Naive thymus-derived CD4-positive, alpha-beta T cell (primary cell): ENCODE measurements at regions of chr16 and their contacts with region 1.

Region 1: GRCh38 chr16:22374311-22375116 is at the start of gene CDR2:
- DNase-seq: peak; percentile 94 to 99 (median 98)
- ATAC-seq: peak; percentile 97
- H3K4me3 ChIP-seq: peak within 1 kb of the TSS; percentile 77
- H3K4me3 Mint-ChIP-seq: peak within 1 kb of the TSS; percentile 93 to 99 (median 98)
- H3K27ac ChIP-seq: peak within 1 kb of the TSS; percentile 86
- H3K27ac Mint-ChIP-seq: peak within 1 kb of the TSS; percentile 91 to 98 (median 93)
- H3K4me1 ChIP-seq: peaks cover 31 to 34% of the 10 kb centered on the region in 2 donors
- H3K4me1 Mint-ChIP-seq: peaks cover 17 to 56% (median 48%) of the 10 kb centered on the region in 7 donors
- H3K27me3 ChIP-seq: no peaks in the 10 kb centered on the region
- H3K27me3 Mint-ChIP-seq: peaks cover 0 to 5% (median 0%) of the 10 kb centered on the region in 5 donors
- total RNA-seq, gene CDR2: 28.7 to 91.9 (median 65.6) TPM

Region 2: DNA sequence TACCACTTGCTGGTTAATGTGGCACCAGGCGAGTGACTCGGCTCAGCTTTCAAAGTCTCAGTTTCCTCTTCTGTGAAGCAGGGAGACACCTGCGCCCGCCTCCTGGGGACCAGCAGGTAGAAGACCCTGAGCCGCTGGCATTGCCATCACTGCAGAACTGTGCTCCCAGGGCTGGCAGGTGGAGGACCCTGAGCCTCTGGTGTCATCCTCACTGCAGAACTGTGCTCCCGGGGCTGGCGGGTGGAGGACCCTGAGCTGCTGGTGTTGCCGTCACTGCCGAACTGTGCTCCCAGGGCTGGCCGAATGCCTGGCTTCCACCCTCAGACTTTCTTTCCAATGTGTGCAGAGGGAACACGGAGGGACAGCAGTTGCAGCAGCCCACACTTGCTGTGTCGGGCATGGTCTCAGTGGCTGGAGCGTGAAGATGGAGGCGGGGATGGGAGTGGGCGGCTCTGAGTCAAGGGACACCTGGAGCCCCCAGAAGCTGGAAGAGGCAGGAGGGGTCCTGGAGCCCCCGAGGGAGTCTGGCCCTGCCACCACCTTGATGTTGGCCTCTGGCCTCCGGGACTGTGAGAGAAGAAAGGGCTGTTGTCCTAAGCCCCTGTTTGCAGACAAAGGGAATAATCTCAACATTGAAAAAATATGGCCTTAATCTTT is 851.0 kb before region 1 on chr16:
- CTCF ChIA-PET with region 1: no interaction called
- POLR2A ChIA-PET with region 1: no interaction called
- intact Hi-C with region 1: loop called in 1 of 2 experiments (anchors 1 kb)
- DNase-seq: no peak
- ATAC-seq: no peak
- H3K4me3 ChIP-seq: no peak overlapping the region
- H3K4me3 Mint-ChIP-seq: peak overlapping the region in 2 of 10 donors; percentile 29 to 56
- H3K27ac ChIP-seq: no peak overlapping the region
- H3K27ac Mint-ChIP-seq: no peak overlapping the region
- H3K4me1 ChIP-seq: no peaks in the 10 kb centered on the region
- H3K4me1 Mint-ChIP-seq: peaks cover 2 to 9% (median 6%) of the 10 kb centered on the region in 7 donors
- H3K27me3 ChIP-seq: no peaks in the 10 kb centered on the region
- H3K27me3 Mint-ChIP-seq: peaks cover 0 to 7% (median 0%) of the 10 kb centered on the region in 5 donors

Region 3: DNA sequence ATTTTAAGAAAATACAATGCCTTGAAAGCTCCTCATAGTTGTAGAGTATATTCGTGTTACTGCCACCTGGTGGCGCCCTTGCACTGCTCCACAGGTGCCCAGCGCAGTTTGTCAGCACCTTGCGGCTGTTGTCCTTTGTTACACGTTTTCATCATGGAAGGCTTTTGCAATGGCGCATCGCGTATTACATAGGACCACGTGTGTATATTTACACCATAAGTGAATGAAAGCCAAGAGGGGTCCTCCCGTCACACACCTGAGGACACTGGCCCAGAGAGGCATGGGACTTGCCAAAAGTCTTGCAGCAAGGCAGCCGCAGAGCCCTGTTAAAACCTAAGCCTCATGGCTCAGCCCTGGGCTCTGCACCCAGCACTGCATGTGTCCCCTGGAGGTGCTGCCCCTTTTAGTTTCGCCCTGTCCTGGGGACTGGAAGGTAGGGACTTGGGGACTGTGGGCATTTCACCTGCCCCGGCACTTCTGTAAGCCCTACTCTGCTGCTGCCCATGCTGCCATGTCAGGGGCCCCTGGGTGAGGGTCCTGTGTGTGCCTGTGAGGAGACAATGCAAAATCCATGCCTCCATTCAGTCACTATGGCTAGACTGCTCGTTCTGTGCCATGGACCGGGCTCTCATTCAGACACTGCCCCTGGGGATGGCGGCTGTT is 53.0 kb before region 1 on chr16:
- CTCF ChIA-PET with region 1: interaction called, 8 read pairs
- POLR2A ChIA-PET with region 1: interaction called, 7 read pairs
- intact Hi-C with region 1: loop called (anchors 2 kb)
- DNase-seq: peak; percentile 53 to 82 (median 73)
- ATAC-seq: peak; percentile 83
- H3K4me3 ChIP-seq: no peak overlapping the region
- H3K4me3 Mint-ChIP-seq: no peak overlapping the region
- H3K27ac ChIP-seq: no peak overlapping the region
- H3K27ac Mint-ChIP-seq: peak overlapping the region in 8 of 9 donors; percentile 67 to 85 (median 81)
- H3K4me1 ChIP-seq: no peaks in the 10 kb centered on the region
- H3K4me1 Mint-ChIP-seq: peaks cover 0 to 15% (median 6%) of the 10 kb centered on the region in 7 donors
- H3K27me3 ChIP-seq: no peaks in the 10 kb centered on the region
- H3K27me3 Mint-ChIP-seq: no peaks in the 10 kb centered on the region

Region 4: GRCh38 chr16:22333457-22333994 is 41.0 kb before region 1 on chr16:
- CTCF ChIA-PET with region 1: interaction called, 5 read pairs
- POLR2A ChIA-PET with region 1: interaction called, 19 read pairs
- intact Hi-C with region 1: loop called (anchors 5 kb)
- DNase-seq: no peak
- ATAC-seq: no peak
- H3K4me3 ChIP-seq: no peak overlapping the region
- H3K4me3 Mint-ChIP-seq: no peak overlapping the region
- H3K27ac ChIP-seq: no peak overlapping the region
- H3K27ac Mint-ChIP-seq: peak overlapping the region in 5 of 9 donors; percentile 1 to 85 (median 56)
- H3K4me1 ChIP-seq: no peaks in the 10 kb centered on the region
- H3K4me1 Mint-ChIP-seq: peaks cover 6 to 35% (median 16%) of the 10 kb centered on the region in 7 donors
- H3K27me3 ChIP-seq: no peaks in the 10 kb centered on the region
- H3K27me3 Mint-ChIP-seq: no peaks in the 10 kb centered on the region

Region 5: DNA sequence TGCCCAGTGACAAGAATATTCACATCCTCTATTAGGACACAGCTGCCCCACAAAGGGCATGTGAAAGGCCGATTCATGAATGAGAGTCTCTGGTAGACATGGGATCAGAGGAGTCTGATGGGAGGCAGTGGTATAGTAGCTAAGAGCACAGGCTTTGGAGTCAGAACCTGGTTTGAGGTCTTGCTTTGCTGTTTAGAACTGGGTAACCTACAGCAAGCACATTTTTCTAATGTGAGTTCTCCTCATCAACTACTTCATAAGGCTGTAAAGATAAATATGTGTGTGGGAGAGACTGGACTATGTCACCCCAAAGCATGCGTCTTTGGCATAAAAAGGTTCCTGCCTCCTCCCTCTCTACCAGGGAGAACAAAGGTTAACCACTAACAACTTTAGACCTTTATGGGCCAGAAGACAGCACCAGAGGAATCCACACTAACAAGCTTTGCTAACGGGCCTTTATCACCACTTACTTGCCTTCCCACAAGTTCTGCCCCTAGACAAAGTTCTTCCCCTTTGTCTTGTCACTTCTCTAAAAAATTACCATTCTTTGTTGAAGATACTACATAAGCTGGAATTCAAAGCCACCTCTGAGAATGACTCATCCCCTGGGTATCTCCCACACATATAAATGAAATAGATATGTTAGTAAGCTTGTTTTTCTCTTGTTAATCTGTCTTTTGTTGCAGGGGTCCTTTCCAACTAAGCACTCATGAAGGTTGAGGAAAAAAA is 21.2 kb before region 1 on chr16:
- CTCF ChIA-PET with region 1: no interaction called
- POLR2A ChIA-PET with region 1: interaction called, 93 read pairs
- intact Hi-C with region 1: loop called (anchors 1 kb)
- DNase-seq: peak in 2 of 9 donors; percentile 36 to 48
- ATAC-seq: peak; percentile 63
- H3K4me3 ChIP-seq: no peak overlapping the region
- H3K4me3 Mint-ChIP-seq: peak overlapping the region; percentile 8 to 62 (median 39)
- H3K27ac ChIP-seq: peak overlapping the region; percentile 48
- H3K27ac Mint-ChIP-seq: peak overlapping the region; percentile 69 to 88 (median 83)
- H3K4me1 ChIP-seq: peaks cover 44 to 52% of the 10 kb centered on the region in 2 donors
- H3K4me1 Mint-ChIP-seq: peaks cover 28 to 70% (median 61%) of the 10 kb centered on the region in 7 donors
- H3K27me3 ChIP-seq: no peaks in the 10 kb centered on the region
- H3K27me3 Mint-ChIP-seq: no peaks in the 10 kb centered on the region

Region 6: GRCh38 chr16:22360963-22361659 is 13.4 kb before region 1 on chr16:
- CTCF ChIA-PET with region 1: no interaction called
- POLR2A ChIA-PET with region 1: interaction called, 93 read pairs
- intact Hi-C with region 1: loop called (anchors 1 kb)
- DNase-seq: no peak
- ATAC-seq: no peak
- H3K4me3 ChIP-seq: no peak overlapping the region
- H3K4me3 Mint-ChIP-seq: peak overlapping the region in 4 of 10 donors; percentile 19 to 58 (median 26)
- H3K27ac ChIP-seq: peak overlapping the region; percentile 18
- H3K27ac Mint-ChIP-seq: peak overlapping the region; percentile 75 to 96 (median 88)
- H3K4me1 ChIP-seq: peaks cover 30 to 50% of the 10 kb centered on the region in 2 donors
- H3K4me1 Mint-ChIP-seq: peaks cover 35 to 89% (median 73%) of the 10 kb centered on the region in 7 donors
- H3K27me3 ChIP-seq: no peaks in the 10 kb centered on the region
- H3K27me3 Mint-ChIP-seq: no peaks in the 10 kb centered on the region

Region 7: GRCh38 chr16:22386976-22387375 is 12.5 kb after region 1 on chr16:
- CTCF ChIA-PET with region 1: no interaction called
- POLR2A ChIA-PET with region 1: interaction called, 19 read pairs
- intact Hi-C with region 1: loop called in 1 of 2 experiments (anchors 1 kb)
- DNase-seq: no peak
- ATAC-seq: no peak
- H3K4me3 ChIP-seq: no peak overlapping the region
- H3K4me3 Mint-ChIP-seq: no peak overlapping the region
- H3K27ac ChIP-seq: no peak overlapping the region
- H3K27ac Mint-ChIP-seq: peak overlapping the region in 1 of 9 donors; percentile 62
- H3K4me1 ChIP-seq: peaks cover under 1 to 10% of the 10 kb centered on the region in 2 donors
- H3K4me1 Mint-ChIP-seq: peaks cover 0 to 13% (median 5%) of the 10 kb centered on the region in 7 donors
- H3K27me3 ChIP-seq: no peaks in the 10 kb centered on the region
- H3K27me3 Mint-ChIP-seq: no peaks in the 10 kb centered on the region